PC-3 (cell line): ENCODE measurements at regions of chr2 and their contacts with region 1.

Region 1: GRCh38 chr2:209423562-209424198 is at the start of gene MAP2:
- DNase-seq: peak; percentile 91
- ATAC-seq: peak; percentile 90
- H3K4me3 ChIP-seq: peak within 1 kb of the TSS; percentile 95
- H3K27ac ChIP-seq: no peak within 1 kb of the TSS
- H3K4me1 ChIP-seq: peaks cover 21% of the 10 kb centered on the region
- H3K27me3 ChIP-seq: no peaks in the 10 kb centered on the region
- CTCF ChIP-seq: peak; percentile 73
- total RNA-seq, gene MAP2: 1.7 and 2.1 TPM in 2 replicates

Region 2: DNA sequence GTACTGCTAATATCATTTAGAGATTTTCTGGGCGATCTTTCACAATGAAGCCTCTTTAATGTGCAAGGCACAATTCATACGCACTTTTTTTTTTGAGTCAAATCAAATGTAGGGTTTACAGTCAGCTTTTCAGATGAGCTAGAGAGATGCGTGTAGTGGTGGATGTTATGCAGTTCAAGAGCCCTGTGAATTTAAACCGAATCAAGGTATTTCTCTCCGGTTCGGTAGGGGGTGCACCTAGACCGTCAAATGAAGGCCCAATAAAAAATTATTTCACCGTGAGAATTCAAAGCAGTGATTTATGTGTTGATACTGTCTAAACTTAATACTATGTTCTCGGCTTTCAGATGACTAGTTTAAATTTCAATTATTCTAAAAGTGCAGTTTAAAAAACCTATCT is 1016.0 kb before region 1 on chr2:
- CTCF ChIA-PET with region 1: no interaction called
- POLR2A ChIA-PET with region 1: no interaction called
- intact Hi-C with region 1: loop called (anchors 5 kb)
- DNase-seq: peak; percentile 55
- ATAC-seq: peak; percentile 78
- H3K4me3 ChIP-seq: no peak overlapping the region
- H3K27ac ChIP-seq: no peak overlapping the region
- H3K4me1 ChIP-seq: no peaks in the 10 kb centered on the region
- H3K27me3 ChIP-seq: peaks cover 88% of the 10 kb centered on the region
- CTCF ChIP-seq: peak; percentile 70

Region 3: DNA sequence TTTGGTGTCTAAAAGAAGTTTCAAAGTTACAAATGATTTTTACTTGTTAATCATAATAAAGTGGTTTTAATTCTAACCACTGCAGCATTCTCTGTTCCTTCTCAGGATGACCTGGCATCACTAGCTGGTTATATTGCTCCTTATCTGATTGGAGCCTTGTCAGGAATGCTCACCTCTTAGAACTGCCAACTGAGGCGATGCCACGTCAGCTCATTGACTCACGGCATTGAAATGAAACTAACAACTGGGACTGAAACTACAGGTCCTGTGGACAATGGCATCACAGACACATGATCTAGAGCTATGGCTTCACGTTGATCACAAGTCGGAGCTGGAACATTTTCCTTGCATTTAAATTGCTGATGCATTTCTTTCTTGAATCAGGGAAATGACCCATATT is 54.8 kb before region 1 on chr2:
- CTCF ChIA-PET with region 1: interaction called, 11 read pairs
- POLR2A ChIA-PET with region 1: no interaction called
- intact Hi-C with region 1: no loop called
- DNase-seq: peak; percentile 99
- ATAC-seq: peak; percentile 94
- H3K4me3 ChIP-seq: peak overlapping the region; percentile 38
- H3K27ac ChIP-seq: peak overlapping the region; percentile 91
- H3K4me1 ChIP-seq: peaks cover 33% of the 10 kb centered on the region
- H3K27me3 ChIP-seq: no peaks in the 10 kb centered on the region
- CTCF ChIP-seq: no peak

Region 4: GRCh38 chr2:209460151-209460761 is 36.6 kb after region 1 on chr2:
- CTCF ChIA-PET with region 1: interaction called, 4 read pairs
- POLR2A ChIA-PET with region 1: no interaction called
- intact Hi-C with region 1: loop called (anchors 2 kb)
- DNase-seq: peak; percentile 92
- ATAC-seq: peak; percentile 94
- H3K4me3 ChIP-seq: peak overlapping the region; percentile 28; the same call in 1 of the 2 replicates
- H3K27ac ChIP-seq: peak overlapping the region; percentile 93
- H3K4me1 ChIP-seq: peaks cover 39% of the 10 kb centered on the region
- H3K27me3 ChIP-seq: no peaks in the 10 kb centered on the region
- CTCF ChIP-seq: no peak

Region 5: DNA sequence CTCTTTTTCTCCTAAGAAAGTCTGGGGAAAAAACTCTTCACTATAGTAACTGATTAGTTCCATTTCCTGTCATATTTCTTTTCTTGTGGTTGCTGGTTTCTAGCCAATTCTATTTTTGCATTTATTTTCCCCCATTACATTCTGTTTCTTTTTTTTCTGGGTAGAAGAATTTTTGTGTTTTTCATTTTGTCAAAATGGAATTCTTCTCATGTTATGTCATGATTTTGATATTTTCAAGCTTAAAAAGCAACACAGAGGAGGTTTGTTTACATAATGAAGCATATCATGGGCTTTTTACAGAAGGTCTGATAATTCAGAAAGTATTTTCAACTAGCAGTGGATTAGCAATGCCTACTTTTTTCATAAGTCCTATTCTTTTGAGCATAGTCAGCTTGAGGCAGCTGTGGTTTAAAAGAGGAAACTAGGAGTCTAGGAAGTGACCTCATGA is 102.2 kb after region 1 on chr2:
- CTCF ChIA-PET with region 1: interaction called, 3 read pairs
- POLR2A ChIA-PET with region 1: no interaction called
- intact Hi-C with region 1: loop called (anchors 1 kb)
- DNase-seq: peak; percentile 55
- ATAC-seq: peak; percentile 69
- H3K4me3 ChIP-seq: no peak overlapping the region
- H3K27ac ChIP-seq: peak overlapping the region; percentile 16
- H3K4me1 ChIP-seq: peaks cover 31% of the 10 kb centered on the region
- H3K27me3 ChIP-seq: no peaks in the 10 kb centered on the region
- CTCF ChIP-seq: no peak

Region 6: GRCh38 chr2:209577376-209578357 is 154.0 kb after region 1 on chr2:
- CTCF ChIA-PET with region 1: interaction called, 4 read pairs
- POLR2A ChIA-PET with region 1: no interaction called
- intact Hi-C with region 1: loop called (anchors 1 kb)
- DNase-seq: peak; percentile 62
- ATAC-seq: no peak
- H3K4me3 ChIP-seq: no peak overlapping the region
- H3K27ac ChIP-seq: no peak overlapping the region
- H3K4me1 ChIP-seq: no peaks in the 10 kb centered on the region
- H3K27me3 ChIP-seq: no peaks in the 10 kb centered on the region
- CTCF ChIP-seq: peak; percentile 62

Region 7: GRCh38 chr2:209771474-209772289 is 348.0 kb after region 1 on chr2 and contains the start of gene UNC80:
- CTCF ChIA-PET with region 1: no interaction called
- POLR2A ChIA-PET with region 1: no interaction called
- intact Hi-C with region 1: no loop called
- DNase-seq: peak; percentile 27
- ATAC-seq: peak; percentile 78
- H3K4me3 ChIP-seq: no peak within 1 kb of the TSS
- H3K27ac ChIP-seq: no peak within 1 kb of the TSS
- H3K4me1 ChIP-seq: no peaks in the 10 kb centered on the region
- H3K27me3 ChIP-seq: peaks cover 13% of the 10 kb centered on the region
- CTCF ChIP-seq: no peak
- total RNA-seq, gene UNC80: not detected in 2 replicates